ENCODE measurements at regions of chr2 and their contacts with region 1.

Region 1: DNA sequence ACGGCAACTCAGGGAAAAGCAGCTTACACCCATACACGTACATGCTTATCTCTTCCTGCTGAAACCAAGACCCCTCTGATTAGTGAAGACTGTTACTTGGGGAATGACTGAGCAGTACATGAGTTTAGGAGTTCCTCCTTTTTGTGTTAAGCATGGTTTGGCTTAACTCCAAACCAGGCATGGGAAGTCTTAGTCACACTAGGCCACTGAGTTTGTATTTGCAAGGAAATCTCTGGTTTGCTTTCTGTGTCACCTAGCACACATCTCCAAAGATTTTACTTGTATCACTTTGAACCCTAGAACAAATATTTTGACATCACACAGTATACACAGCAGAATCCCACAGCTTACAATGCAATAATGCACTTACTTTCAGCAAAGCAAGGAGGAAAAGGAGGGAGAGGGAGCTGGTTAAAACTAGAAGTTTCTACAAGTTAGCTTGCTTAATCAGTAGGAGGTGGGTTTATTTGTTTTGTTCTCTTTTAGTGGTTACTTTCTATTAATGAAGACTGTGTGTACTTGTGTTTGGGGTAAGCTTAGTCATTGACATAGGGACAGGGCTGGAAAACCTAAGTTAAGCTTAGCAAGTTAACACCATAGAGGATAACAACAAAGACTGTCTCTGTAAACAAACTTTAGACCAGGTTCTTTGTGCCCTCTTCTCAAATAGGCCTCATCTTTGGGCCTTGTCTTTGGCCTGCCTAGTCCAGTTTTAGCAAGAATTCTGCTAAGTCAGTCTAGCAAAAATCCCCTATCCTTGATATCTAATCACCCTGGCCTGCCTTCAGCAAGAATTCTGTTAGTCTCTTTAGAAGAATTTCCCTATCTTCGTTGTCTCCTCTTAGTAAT is 219.4 kb downstream of the MREG start:
- DNase-seq: peak; percentile 91 to 96 (median 92)
- H3K4me3 ChIP-seq: peak overlapping the region in 1 of 3 experiments; percentile 29
- H3K4me3 Mint-ChIP-seq: peak overlapping the region in 1 of 2 donors; percentile 63
- H3K27ac ChIP-seq: peak overlapping the region; percentile 19 to 88
- H3K27ac Mint-ChIP-seq: peak overlapping the region; percentile 92 to 97 (median 95)
- H3K4me1 ChIP-seq: peaks cover 51 to 73% of the 10 kb centered on the region in 2 donors
- H3K4me1 Mint-ChIP-seq: peaks cover 66% of the 10 kb centered on the region
- H3K27me3 ChIP-seq: no peaks in the 10 kb centered on the region
- H3K27me3 Mint-ChIP-seq: peaks cover 0 to 2% (median 1%) of the 10 kb centered on the region in 3 donors
- CTCF ChIP-seq: no peak

Region 2: GRCh38 chr2:215749092-215749957 is 44.6 kb before region 1 on chr2:
- intact Hi-C with region 1: loop called in 1 of 2 experiments (anchors 5 kb)
- DNase-seq: peak; percentile 78 to 83 (median 81)
- H3K4me3 ChIP-seq: no peak overlapping the region
- H3K4me3 Mint-ChIP-seq: peak overlapping the region in 1 of 2 donors; percentile 53
- H3K27ac ChIP-seq: peak overlapping the region; percentile 67 to 86
- H3K27ac Mint-ChIP-seq: peak overlapping the region; percentile 89 to 98 (median 97)
- H3K4me1 ChIP-seq: peaks cover 46 to 57% of the 10 kb centered on the region in 2 donors
- H3K4me1 Mint-ChIP-seq: peaks cover 62% of the 10 kb centered on the region
- H3K27me3 ChIP-seq: no peaks in the 10 kb centered on the region
- H3K27me3 Mint-ChIP-seq: peaks cover 0 to 23% (median 16%) of the 10 kb centered on the region in 3 donors
- CTCF ChIP-seq: no peak

Region 3: GRCh38 chr2:215760557-215760956 is 33.4 kb before region 1 on chr2:
- intact Hi-C with region 1: no loop called
- DNase-seq: no peak
- H3K4me3 ChIP-seq: no peak overlapping the region
- H3K4me3 Mint-ChIP-seq: no peak overlapping the region
- H3K27ac ChIP-seq: no peak overlapping the region
- H3K27ac Mint-ChIP-seq: no peak overlapping the region
- H3K4me1 ChIP-seq: peaks cover 17 to 19% of the 10 kb centered on the region in 2 donors
- H3K4me1 Mint-ChIP-seq: peaks cover 18% of the 10 kb centered on the region
- H3K27me3 ChIP-seq: no peaks in the 10 kb centered on the region
- H3K27me3 Mint-ChIP-seq: peaks cover 0 to 2% (median under 1%) of the 10 kb centered on the region in 3 donors
- CTCF ChIP-seq: no peak

Region 4: DNA sequence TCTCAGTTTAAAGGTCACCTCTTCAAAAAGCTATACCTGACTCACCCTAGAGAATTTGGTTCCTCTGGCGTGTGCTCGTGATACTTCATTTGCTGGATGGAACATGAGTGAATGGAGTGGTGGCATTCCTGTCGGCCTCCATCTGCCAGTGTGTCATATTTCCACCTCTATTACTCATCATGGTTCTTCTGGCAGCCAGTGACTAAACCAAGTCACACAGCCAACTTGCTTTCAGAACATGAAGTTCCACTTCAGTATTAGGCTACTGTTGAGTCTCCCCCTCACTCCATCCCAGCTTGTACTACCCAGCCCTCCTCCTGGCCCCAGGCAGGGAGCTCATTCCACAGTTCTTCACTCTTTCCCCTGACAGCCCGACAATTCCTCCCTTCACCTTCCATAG is 49.6 kb after region 1 on chr2:
- intact Hi-C with region 1: loop called in 1 of 2 experiments (anchors 5 kb)
- DNase-seq: peak; percentile 22 to 68 (median 46)
- H3K4me3 ChIP-seq: no peak overlapping the region
- H3K4me3 Mint-ChIP-seq: no peak overlapping the region
- H3K27ac ChIP-seq: no peak overlapping the region
- H3K27ac Mint-ChIP-seq: no peak overlapping the region
- H3K4me1 ChIP-seq: peaks cover 37 to 43% of the 10 kb centered on the region in 2 donors
- H3K4me1 Mint-ChIP-seq: peaks cover 35% of the 10 kb centered on the region
- H3K27me3 ChIP-seq: peaks cover 0 to 2% of the 10 kb centered on the region in 2 donors
- H3K27me3 Mint-ChIP-seq: peaks cover 1 to 5% (median 2%) of the 10 kb centered on the region in 3 donors
- CTCF ChIP-seq: no peak

Region 5: GRCh38 chr2:215883799-215884198 is 89.8 kb after region 1 on chr2:
- intact Hi-C with region 1: no loop called
- DNase-seq: no peak
- H3K4me3 ChIP-seq: no peak overlapping the region
- H3K4me3 Mint-ChIP-seq: no peak overlapping the region
- H3K27ac ChIP-seq: no peak overlapping the region
- H3K27ac Mint-ChIP-seq: no peak overlapping the region
- H3K4me1 ChIP-seq: peaks cover under 1 to 19% of the 10 kb centered on the region in 2 donors
- H3K4me1 Mint-ChIP-seq: peaks cover 17% of the 10 kb centered on the region
- H3K27me3 ChIP-seq: no peaks in the 10 kb centered on the region
- H3K27me3 Mint-ChIP-seq: peaks cover 1 to 5% (median 2%) of the 10 kb centered on the region in 3 donors
- CTCF ChIP-seq: no peak

Region 6: GRCh38 chr2:216551234-216551633 is 757.3 kb after region 1 on chr2:
- intact Hi-C with region 1: no loop called
- DNase-seq: no peak
- H3K4me3 ChIP-seq: no peak overlapping the region
- H3K4me3 Mint-ChIP-seq: no peak overlapping the region
- H3K27ac ChIP-seq: no peak overlapping the region
- H3K27ac Mint-ChIP-seq: peak overlapping the region in 1 of 7 donors; percentile 58
- H3K4me1 ChIP-seq: peaks cover 0 to 4% of the 10 kb centered on the region in 2 donors
- H3K4me1 Mint-ChIP-seq: peaks cover 9% of the 10 kb centered on the region
- H3K27me3 ChIP-seq: no peaks in the 10 kb centered on the region
- H3K27me3 Mint-ChIP-seq: peaks cover 0 to 3% (median 2%) of the 10 kb centered on the region in 3 donors
- CTCF ChIP-seq: no peak